Prostate gland (tissue), 2 donors: ENCODE measurements at regions of chr21 and their contacts with region 1.

Region 1: GRCh38 chr21:34822942-34823341 is 154.1 kb downstream of the CLIC6 start:
- DNase-seq: no peak
- H3K4me3 ChIP-seq: no peak overlapping the region
- H3K27ac ChIP-seq: no peak overlapping the region
- H3K4me1 ChIP-seq: no peaks in the 10 kb centered on the region
- H3K27me3 ChIP-seq: no peaks in the 10 kb centered on the region
- CTCF ChIP-seq: no peak
- POLR2A ChIP-seq: no peak

Region 2: DNA sequence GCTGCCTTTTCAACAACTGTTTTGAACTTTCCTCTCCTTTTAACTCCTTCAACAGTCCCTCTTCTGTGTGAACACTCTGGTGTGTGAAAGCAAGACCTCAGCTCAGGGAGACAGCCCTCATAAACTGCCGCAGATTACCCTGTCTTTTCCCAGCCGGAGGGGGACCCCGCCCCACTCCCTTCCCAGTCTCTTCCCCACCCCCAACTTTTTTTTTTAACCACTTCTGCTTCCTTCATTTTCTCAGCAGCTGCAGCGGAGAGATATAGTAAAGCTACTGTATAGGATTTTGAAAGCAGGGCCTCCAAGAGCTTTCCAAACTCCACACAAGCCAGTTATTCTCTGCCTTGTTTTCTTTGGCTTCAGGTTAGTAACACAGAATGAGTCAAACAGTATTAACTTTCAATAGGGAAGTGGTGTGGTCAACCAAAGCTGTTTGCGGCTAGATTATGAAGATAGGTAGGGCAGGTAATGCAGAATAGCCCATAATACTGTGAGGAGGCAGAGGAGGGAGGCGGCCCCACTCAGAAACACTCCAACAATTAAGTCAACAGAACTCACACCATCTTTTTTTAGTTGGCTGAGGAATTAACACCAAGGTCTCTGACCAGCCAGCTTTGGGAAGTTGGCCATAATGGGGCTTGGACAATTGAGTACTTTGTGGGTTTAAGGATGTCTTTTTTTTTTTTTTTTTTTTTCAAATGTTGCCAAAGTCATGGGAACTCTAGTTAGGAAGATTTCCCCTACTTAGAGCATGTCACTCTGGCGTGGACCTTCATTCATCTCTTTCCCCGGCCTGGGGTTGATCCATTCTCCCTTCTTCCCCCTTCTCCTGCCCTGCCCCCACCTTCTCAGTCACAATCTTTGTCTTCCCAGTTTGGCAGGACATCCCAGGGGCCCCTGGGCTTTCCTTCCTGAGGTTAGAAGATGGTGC is 22.8 kb after region 1 on chr21:
- intact Hi-C with region 1: loop called (anchors 2 kb)
- DNase-seq: peak; percentile 80
- H3K4me3 ChIP-seq: no peak overlapping the region
- H3K27ac ChIP-seq: peak overlapping the region; percentile 66 to 68
- H3K4me1 ChIP-seq: peaks cover 16% of the 10 kb centered on the region
- H3K27me3 ChIP-seq: no peaks in the 10 kb centered on the region
- CTCF ChIP-seq: no peak
- POLR2A ChIP-seq: peak; percentile 17

Region 3: GRCh38 chr21:35020902-35021301 is 198.0 kb after region 1 on chr21:
- intact Hi-C with region 1: no loop called
- DNase-seq: no peak
- H3K4me3 ChIP-seq: no peak overlapping the region
- H3K27ac ChIP-seq: no peak overlapping the region
- H3K4me1 ChIP-seq: no peaks in the 10 kb centered on the region
- H3K27me3 ChIP-seq: no peaks in the 10 kb centered on the region
- CTCF ChIP-seq: no peak
- POLR2A ChIP-seq: no peak

Region 4: GRCh38 chr21:35920436-35920835 is 1097.5 kb after region 1 on chr21:
- intact Hi-C with region 1: no loop called
- DNase-seq: no peak
- H3K4me3 ChIP-seq: no peak overlapping the region
- H3K27ac ChIP-seq: no peak overlapping the region
- H3K4me1 ChIP-seq: no peaks in the 10 kb centered on the region
- H3K27me3 ChIP-seq: no peaks in the 10 kb centered on the region
- CTCF ChIP-seq: no peak
- POLR2A ChIP-seq: no peak